ENCODE measurements at regions of chr10 and their contacts with region 1.

Region 1: GRCh38 chr10:126376956-126377355 is 11.3 kb downstream of the ADAM12 start:
- DNase-seq: peak; percentile 85
- ATAC-seq: peak; percentile 95
- H3K4me3 ChIP-seq: no peak overlapping the region; the same call in 1 of the 2 replicates
- H3K27ac ChIP-seq: peak overlapping the region; percentile 92
- H3K4me1 ChIP-seq: peaks cover 29% of the 10 kb centered on the region
- H3K27me3 ChIP-seq: no peaks in the 10 kb centered on the region
- CTCF ChIP-seq: no peak

Region 2: GRCh38 chr10:126199221-126199998 is 177.5 kb before region 1 on chr10:
- CTCF ChIA-PET with region 1: no interaction called
- POLR2A ChIA-PET with region 1: no interaction called
- intact Hi-C with region 1: loop called (anchors 5 kb)
- DNase-seq: peak; percentile 94
- ATAC-seq: peak; percentile 94
- H3K4me3 ChIP-seq: no peak overlapping the region
- H3K27ac ChIP-seq: peak overlapping the region; percentile 88
- H3K4me1 ChIP-seq: peaks cover 22% of the 10 kb centered on the region
- H3K27me3 ChIP-seq: no peaks in the 10 kb centered on the region
- CTCF ChIP-seq: no peak